Activated CD4-positive, alpha-beta memory T cell treated with anti-CD3 and anti-CD28 coated beads for 36 hours (primary cell): ENCODE measurements at regions of chr13 and their contacts with region 1.

Region 1: GRCh38 chr13:52450012-52450792 is at the start of gene VPS36:
- DNase-seq: peak; percentile 95
- H3K4me3 Mint-ChIP-seq: peak within 1 kb of the TSS; percentile 96
- H3K27ac Mint-ChIP-seq: peak within 1 kb of the TSS; percentile 88
- H3K4me1 Mint-ChIP-seq: peaks cover 39% of the 10 kb centered on the region
- H3K27me3 Mint-ChIP-seq: peaks cover under 1% of the 10 kb centered on the region
- total RNA-seq, gene VPS36: 24.7 to 26.6 TPM

Region 2: DNA sequence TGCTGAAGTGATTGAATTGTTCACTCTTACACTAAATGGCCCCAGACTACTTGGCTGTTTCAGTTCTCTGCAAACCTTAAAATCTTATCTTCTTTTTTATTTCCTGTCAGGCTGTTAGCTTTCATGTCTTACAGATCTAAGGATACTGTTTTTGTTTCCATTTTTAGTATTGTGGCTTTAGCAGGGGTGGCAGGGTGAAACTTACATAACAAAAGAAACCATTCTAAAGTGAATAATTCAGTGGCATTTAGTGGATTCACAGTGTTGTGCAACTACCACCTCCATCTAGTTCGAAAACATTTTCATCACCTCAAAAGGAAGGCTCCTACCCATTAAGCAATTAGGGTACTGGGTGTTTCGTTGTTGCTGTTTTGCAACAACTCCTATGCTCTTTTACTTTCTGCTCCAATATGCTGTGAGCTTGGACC is 625.0 kb before region 1 on chr13:
- CTCF ChIA-PET with region 1: interaction called, 5 read pairs
- POLR2A ChIA-PET with region 1: no interaction called
- intact Hi-C with region 1: loop called (anchors 2 kb)
- DNase-seq: no peak
- H3K4me3 Mint-ChIP-seq: peak overlapping the region; percentile 52
- H3K27ac Mint-ChIP-seq: peak overlapping the region; percentile 84
- H3K4me1 Mint-ChIP-seq: peaks cover 81% of the 10 kb centered on the region
- H3K27me3 Mint-ChIP-seq: no peaks in the 10 kb centered on the region

Region 3: GRCh38 chr13:52159321-52160086 is 290.7 kb before region 1 on chr13 and contains the start of gene NEK3:
- CTCF ChIA-PET with region 1: no interaction called
- POLR2A ChIA-PET with region 1: no interaction called
- intact Hi-C with region 1: loop called (anchors 10 kb)
- DNase-seq: peak; percentile 72
- H3K4me3 Mint-ChIP-seq: peak within 1 kb of the TSS; percentile 83
- H3K27ac Mint-ChIP-seq: peak within 1 kb of the TSS; percentile 68
- H3K4me1 Mint-ChIP-seq: peaks cover 26% of the 10 kb centered on the region
- H3K27me3 Mint-ChIP-seq: no peaks in the 10 kb centered on the region
- total RNA-seq, gene NEK3: 11.0 to 12.9 TPM

Region 4: DNA sequence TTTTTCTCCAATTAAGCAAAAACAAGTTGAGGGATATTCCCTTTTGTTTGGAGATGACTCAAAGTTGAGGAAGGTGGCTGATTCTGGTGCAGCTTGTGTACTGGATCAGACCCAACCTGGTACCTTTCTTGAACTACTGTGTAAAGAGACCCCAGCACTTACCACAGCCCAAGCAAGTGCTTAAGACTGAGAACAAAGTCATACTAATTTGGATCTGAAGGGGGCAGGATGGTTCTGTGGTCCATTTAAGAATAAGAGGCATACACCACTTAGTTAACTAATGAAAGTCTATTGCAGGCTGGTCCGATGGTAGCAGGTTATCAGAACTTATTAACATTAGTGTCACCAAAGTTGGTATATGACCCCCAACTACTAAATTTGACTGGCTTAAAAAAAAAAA is 50.5 kb before region 1 on chr13:
- CTCF ChIA-PET with region 1: interaction called, 8 read pairs
- POLR2A ChIA-PET with region 1: no interaction called
- intact Hi-C with region 1: loop called (anchors 5 kb)
- DNase-seq: no peak
- H3K4me3 Mint-ChIP-seq: no peak overlapping the region
- H3K27ac Mint-ChIP-seq: no peak overlapping the region
- H3K4me1 Mint-ChIP-seq: peaks cover 6% of the 10 kb centered on the region
- H3K27me3 Mint-ChIP-seq: peaks cover 22% of the 10 kb centered on the region

Region 5: GRCh38 chr13:52652196-52652979 is 202.2 kb after region 1 on chr13 and contains the start of gene SUGT1:
- CTCF ChIA-PET with region 1: interaction called, 17 read pairs
- POLR2A ChIA-PET with region 1: interaction called, 3 read pairs
- intact Hi-C with region 1: loop called (anchors 1 kb)
- DNase-seq: peak; percentile 96
- H3K4me3 Mint-ChIP-seq: no peak within 1 kb of the TSS
- H3K27ac Mint-ChIP-seq: no peak within 1 kb of the TSS
- H3K4me1 Mint-ChIP-seq: peaks cover 16% of the 10 kb centered on the region
- H3K27me3 Mint-ChIP-seq: no peaks in the 10 kb centered on the region
- total RNA-seq, gene SUGT1: 63.1 to 64.0 TPM

Region 6: DNA sequence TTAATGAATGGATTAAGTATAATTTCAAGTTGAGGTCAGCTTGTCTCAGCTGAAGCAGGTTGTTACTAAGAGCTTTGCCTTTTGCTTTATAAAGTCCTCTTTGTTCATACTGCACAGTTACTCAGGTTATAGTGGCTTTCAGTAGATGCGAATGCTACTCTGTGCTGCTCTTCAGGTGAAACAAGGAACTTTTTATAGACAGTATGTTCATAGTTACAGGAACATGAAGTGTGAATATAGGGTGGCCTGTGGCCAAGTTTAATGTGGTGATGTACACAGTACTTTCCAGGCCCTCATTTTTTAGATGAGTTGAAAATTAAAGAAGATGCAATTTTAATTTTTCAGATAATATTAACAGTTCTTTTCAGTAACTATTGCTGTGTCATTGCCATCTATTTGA is 223.3 kb after region 1 on chr13:
- CTCF ChIA-PET with region 1: no interaction called
- POLR2A ChIA-PET with region 1: no interaction called
- intact Hi-C with region 1: no loop called
- DNase-seq: no peak
- H3K4me3 Mint-ChIP-seq: no peak overlapping the region
- H3K27ac Mint-ChIP-seq: no peak overlapping the region
- H3K4me1 Mint-ChIP-seq: peaks cover 2% of the 10 kb centered on the region
- H3K27me3 Mint-ChIP-seq: no peaks in the 10 kb centered on the region